PC-9 (cell line): ENCODE measurements at regions of chr3 and their contacts with region 1.

Region 1: DNA sequence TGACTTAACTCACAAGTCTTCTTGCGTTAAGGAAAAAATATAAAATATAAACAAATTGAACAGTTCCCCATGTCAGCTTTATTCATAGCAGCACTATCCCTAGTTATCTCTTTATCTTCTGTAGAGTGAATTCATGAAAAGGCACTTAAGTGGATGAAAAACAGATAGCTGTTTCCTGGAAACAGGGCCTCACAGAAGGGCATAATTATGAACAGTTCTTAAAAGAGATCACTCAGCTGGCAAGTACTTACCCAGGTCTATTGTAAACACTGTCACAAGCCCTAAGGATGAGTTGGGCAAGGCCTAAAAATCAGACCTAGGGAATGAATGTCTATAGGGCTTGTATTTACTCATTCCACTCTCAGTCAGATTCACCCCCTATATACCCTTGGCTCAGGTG is 10.7 kb downstream of the MB21D2 start:
- DNase-seq: peak in 1 of 2 experiments; percentile 84
- H3K4me3 ChIP-seq: no peak overlapping the region
- H3K27ac ChIP-seq: peak overlapping the region; percentile 89
- H3K4me1 ChIP-seq: peaks cover 58% of the 10 kb centered on the region
- H3K27me3 ChIP-seq: no peaks in the 10 kb centered on the region
- CTCF ChIP-seq: no peak

Region 2: DNA sequence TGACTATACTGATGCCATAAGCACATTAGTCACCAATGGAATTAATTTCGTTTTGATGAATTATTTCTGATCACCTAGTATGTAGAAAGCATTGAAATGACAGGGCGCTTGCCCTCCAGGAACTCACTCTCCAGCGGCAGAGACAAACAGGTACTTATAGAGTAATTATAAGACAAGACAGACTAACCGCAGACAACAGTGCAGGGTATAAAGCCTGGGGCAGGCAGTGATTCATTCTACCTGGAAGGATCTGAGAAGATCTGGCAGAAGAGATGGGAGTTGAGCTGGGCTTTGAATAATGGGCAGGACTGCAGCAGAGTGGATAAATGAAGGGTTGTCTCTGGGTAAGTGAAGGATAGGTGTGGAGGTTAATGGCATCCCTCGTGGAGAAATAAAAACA is 511.4 kb before region 1 on chr3:
- CTCF ChIA-PET with region 1: no interaction called
- POLR2A ChIA-PET with region 1: no interaction called
- intact Hi-C with region 1: no loop called
- DNase-seq: no peak
- H3K4me3 ChIP-seq: no peak overlapping the region
- H3K27ac ChIP-seq: no peak overlapping the region
- H3K4me1 ChIP-seq: no peaks in the 10 kb centered on the region
- H3K27me3 ChIP-seq: no peaks in the 10 kb centered on the region
- CTCF ChIP-seq: no peak

Region 3: GRCh38 chr3:192879336-192880106 is 27.4 kb before region 1 on chr3:
- CTCF ChIA-PET with region 1: no interaction called
- POLR2A ChIA-PET with region 1: interaction called, 10 read pairs
- intact Hi-C with region 1: loop called (anchors 1 kb)
- DNase-seq: peak; percentile 92 to 100
- H3K4me3 ChIP-seq: peak overlapping the region; percentile 37; the same call in 1 of the 2 replicates
- H3K27ac ChIP-seq: no peak overlapping the region
- H3K4me1 ChIP-seq: peaks cover 42% of the 10 kb centered on the region
- H3K27me3 ChIP-seq: no peaks in the 10 kb centered on the region
- CTCF ChIP-seq: no peak

Region 4: GRCh38 chr3:192887047-192887446 is 19.9 kb before region 1 on chr3:
- CTCF ChIA-PET with region 1: interaction called, 5 read pairs
- POLR2A ChIA-PET with region 1: interaction called, 10 read pairs
- intact Hi-C with region 1: loop called (anchors 1 kb)
- DNase-seq: peak in 1 of 2 experiments; percentile 62
- H3K4me3 ChIP-seq: no peak overlapping the region
- H3K27ac ChIP-seq: no peak overlapping the region
- H3K4me1 ChIP-seq: peaks cover 71% of the 10 kb centered on the region
- H3K27me3 ChIP-seq: no peaks in the 10 kb centered on the region
- CTCF ChIP-seq: no peak

Region 5: DNA sequence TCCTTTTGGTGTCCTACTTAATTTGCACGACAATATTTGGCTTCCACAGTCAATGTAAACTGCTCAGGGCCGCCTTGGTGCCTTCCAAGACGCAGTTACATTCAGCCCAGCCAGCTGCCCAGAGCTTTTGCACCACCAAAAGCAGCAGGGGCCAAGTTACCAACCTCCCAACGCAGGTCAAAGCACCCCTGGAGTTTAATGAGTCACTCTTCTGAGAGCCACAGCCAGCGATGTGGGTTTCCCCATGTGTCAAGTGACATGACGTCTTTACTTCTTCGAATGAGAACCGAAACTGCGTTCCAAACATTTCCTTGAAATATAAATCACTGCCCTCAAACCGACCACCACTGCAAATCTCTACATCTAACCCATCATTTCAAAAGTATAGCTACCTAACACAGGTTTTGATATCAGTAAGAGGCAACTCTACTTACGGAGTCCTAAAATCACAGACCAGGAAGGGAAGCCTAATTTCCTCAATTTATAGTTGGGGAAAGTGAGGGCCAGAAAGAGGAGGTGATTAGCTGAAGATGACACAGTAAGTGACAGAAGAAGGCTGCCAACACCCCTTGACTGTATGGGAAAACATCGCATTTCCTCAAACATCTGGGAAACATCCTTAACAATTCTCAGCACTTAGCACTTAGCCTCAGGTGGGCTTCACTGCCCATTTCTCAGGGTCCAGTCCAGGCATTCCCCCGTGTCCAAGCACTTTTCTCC is 13.8 kb before region 1 on chr3:
- CTCF ChIA-PET with region 1: interaction called, 12 read pairs
- POLR2A ChIA-PET with region 1: interaction called, 9 read pairs
- intact Hi-C with region 1: loop called (anchors 1 kb)
- DNase-seq: peak; percentile 89 to 99
- H3K4me3 ChIP-seq: peak overlapping the region; percentile 44; the same call in 1 of the 2 replicates
- H3K27ac ChIP-seq: peak overlapping the region; percentile 88
- H3K4me1 ChIP-seq: peaks cover 96% of the 10 kb centered on the region
- H3K27me3 ChIP-seq: no peaks in the 10 kb centered on the region
- CTCF ChIP-seq: no peak